Activated T-helper 2 cell treated with anti-CD3 and anti-CD28 coated beads, Interferon-gamma antibody, Interleukin-2, Interleukin-4, amounts not matched to agents 10 μg/mL and 5 μg/mL and 100 μg/mL, durations not matched to agents 14 hours and 24 hours and 36 hours (primary cell): ENCODE measurements at regions of chr9 and their contacts with region 1.

Region 1: GRCh38 chr9:114930056-114930812 is at the start of gene TNFSF8:
- DNase-seq: peak; percentile 79
- H3K4me3 Mint-ChIP-seq: peak within 1 kb of the TSS; percentile 98
- H3K27ac Mint-ChIP-seq: peak within 1 kb of the TSS; percentile 98
- H3K4me1 Mint-ChIP-seq: peaks cover 47% of the 10 kb centered on the region
- H3K27me3 Mint-ChIP-seq: no peaks in the 10 kb centered on the region
- total RNA-seq, gene TNFSF8: 73.6 and 82.3 TPM in 2 replicates

Region 2: GRCh38 chr9:114906908-114907571 is 23.2 kb before region 1 on chr9:
- intact Hi-C with region 1: loop called (anchors 1 kb)
- DNase-seq: no peak
- H3K4me3 Mint-ChIP-seq: no peak overlapping the region
- H3K27ac Mint-ChIP-seq: peak overlapping the region; percentile 94
- H3K4me1 Mint-ChIP-seq: peaks cover 84% of the 10 kb centered on the region
- H3K27me3 Mint-ChIP-seq: no peaks in the 10 kb centered on the region

Region 3: GRCh38 chr9:114988962-114989599 is 58.8 kb after region 1 on chr9:
- intact Hi-C with region 1: loop called (anchors 2 kb)
- DNase-seq: no peak
- H3K4me3 Mint-ChIP-seq: no peak overlapping the region
- H3K27ac Mint-ChIP-seq: peak overlapping the region; percentile 97
- H3K4me1 Mint-ChIP-seq: peaks cover 59% of the 10 kb centered on the region
- H3K27me3 Mint-ChIP-seq: no peaks in the 10 kb centered on the region

Region 4: DNA sequence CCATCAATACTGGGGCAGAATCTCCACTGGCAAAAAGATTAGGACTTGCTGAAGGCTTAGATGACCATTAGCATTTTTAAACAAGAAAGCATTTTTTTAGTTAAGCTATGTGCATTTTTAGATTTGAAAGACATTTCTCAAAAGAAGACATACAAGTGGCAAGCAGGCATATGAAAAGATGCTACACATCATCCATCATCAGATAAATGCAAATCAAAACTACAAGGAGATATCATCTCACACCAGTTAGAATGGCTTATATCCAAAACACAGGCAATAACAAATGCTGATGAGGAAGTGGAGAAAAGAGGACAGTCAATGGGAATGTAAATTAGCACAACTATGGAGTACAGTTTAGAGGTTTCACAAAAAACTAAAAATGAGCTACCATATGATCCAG is 383.3 kb after region 1 on chr9:
- intact Hi-C with region 1: no loop called
- DNase-seq: no peak
- H3K4me3 Mint-ChIP-seq: no peak overlapping the region
- H3K27ac Mint-ChIP-seq: no peak overlapping the region
- H3K4me1 Mint-ChIP-seq: no peaks in the 10 kb centered on the region
- H3K27me3 Mint-ChIP-seq: no peaks in the 10 kb centered on the region